ENCODE measurements at regions of chr6 and their contacts with region 1.

Region 1: DNA sequence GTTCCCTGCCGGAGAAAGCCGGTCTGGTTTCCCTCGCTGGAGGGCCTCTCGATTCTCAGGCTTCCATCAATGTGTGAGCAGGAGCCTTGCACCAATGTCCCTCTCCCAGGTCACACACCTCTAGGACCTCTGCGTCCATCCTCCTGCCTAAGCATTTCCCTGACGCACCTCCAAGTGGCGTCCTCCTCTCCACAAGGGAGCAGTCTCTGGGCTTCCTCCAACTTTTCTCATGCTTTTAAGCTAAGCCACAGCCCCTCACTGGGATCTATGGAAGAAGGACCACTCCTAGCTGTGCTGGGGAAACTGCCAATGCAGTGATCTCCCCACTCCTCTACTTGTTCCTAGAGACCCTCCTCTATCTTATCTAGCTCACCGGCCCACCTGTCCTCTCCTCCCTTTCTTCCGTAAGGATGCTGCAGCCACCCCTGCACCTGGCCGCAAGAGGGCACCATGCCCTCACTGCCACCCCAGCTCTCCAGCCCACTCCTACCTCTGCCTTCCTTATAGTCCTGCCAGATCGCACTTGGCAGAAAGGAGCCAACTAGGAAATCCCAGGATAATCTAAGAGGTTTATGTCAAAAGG is 258.7 kb downstream of the LRFN2 start:
- DNase-seq: peak in 6 of 7 donors; percentile 19 to 63 (median 32)
- H3K4me3 ChIP-seq: no peak overlapping the region
- H3K27ac ChIP-seq: no peak overlapping the region
- H3K4me1 ChIP-seq: no peaks in the 10 kb centered on the region
- H3K27me3 ChIP-seq: peaks cover 8% of the 10 kb centered on the region
- CTCF ChIP-seq: peak; percentile 30 to 65 (median 54)
- POLR2A ChIP-seq: no peak

Region 2: GRCh38 chr6:40232698-40233097 is 95.8 kb before region 1 on chr6:
- intact Hi-C with region 1: no loop called
- DNase-seq: no peak
- H3K4me3 ChIP-seq: no peak overlapping the region
- H3K27ac ChIP-seq: no peak overlapping the region
- H3K4me1 ChIP-seq: no peaks in the 10 kb centered on the region
- H3K27me3 ChIP-seq: peaks cover 7% of the 10 kb centered on the region
- CTCF ChIP-seq: no peak
- POLR2A ChIP-seq: no peak

Region 3: GRCh38 chr6:40587240-40588069 is 259.0 kb after region 1 on chr6 and contains the start of gene LRFN2:
- intact Hi-C with region 1: loop called in 1 of 2 experiments (anchors 5 kb)
- DNase-seq: peak; percentile 71 to 83 (median 78)
- H3K4me3 ChIP-seq: peak within 1 kb of the TSS in 2 of 4 donors; percentile 9 to 46
- H3K27ac ChIP-seq: peak within 1 kb of the TSS in 2 of 5 donors; percentile 21 to 38
- H3K4me1 ChIP-seq: peaks cover 0 to 15% of the 10 kb centered on the region in 2 donors
- H3K27me3 ChIP-seq: peaks cover 20% of the 10 kb centered on the region
- CTCF ChIP-seq: peak; percentile 27 to 85 (median 62)
- POLR2A ChIP-seq: no peak
- total RNA-seq, gene LRFN2: 0.07 to 0.74 (median 0.15) TPM in 6 of 9 donors, not detected in the others